Heart right ventricle (tissue), 16 donors: ENCODE measurements at regions of chr3 and their contacts with region 1.

Region 1: DNA sequence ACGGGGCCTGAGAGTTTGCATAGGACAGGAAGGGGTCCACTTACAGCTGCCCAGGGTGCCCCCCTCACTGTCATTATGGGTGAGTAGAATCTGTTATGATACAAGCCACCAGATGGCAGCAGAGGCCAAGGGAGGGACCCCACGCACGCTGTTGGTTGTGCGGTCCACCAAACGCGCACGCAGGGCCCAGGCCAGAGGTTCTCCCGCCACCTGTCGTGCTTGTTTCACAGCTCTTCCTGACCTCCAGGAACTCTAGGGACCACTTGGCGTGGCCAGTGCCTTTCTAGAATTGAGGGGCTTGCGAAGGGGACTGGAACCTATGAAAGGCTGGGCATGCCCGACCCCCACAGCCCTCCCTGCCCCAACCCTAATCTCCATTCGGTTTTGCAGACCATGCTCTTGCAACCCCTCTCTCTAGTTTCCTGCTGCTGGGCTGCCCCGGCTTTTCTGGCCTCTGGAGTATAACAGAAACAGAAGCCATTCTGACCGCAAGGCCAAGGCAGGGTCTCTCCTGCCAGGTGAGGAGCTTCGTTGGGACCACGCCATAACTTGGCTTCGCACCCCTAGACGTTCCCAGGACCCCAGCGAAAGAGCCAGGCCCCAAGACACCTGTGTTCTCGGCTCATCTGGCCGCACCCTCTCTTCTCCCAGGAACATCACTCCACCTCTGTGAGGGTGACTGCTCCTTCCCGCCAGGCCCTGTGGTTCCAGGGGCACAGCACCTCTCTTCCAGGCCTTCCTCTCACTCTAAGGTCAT is 46.0 kb downstream of the ALDH1L1 start:
- DNase-seq: peak; percentile 57 to 67
- ATAC-seq: peak; percentile 69 to 87 (median 84)
- H3K4me3 ChIP-seq: no peak overlapping the region
- H3K27ac ChIP-seq: no peak overlapping the region
- H3K4me1 ChIP-seq: peaks cover 0 to 9% (median 0%) of the 10 kb centered on the region in 9 donors
- H3K27me3 ChIP-seq: peaks cover 0 to 11% (median 0%) of the 10 kb centered on the region in 7 donors
- CTCF ChIP-seq: peak; percentile 70 to 88 (median 81)

Region 2: GRCh38 chr3:126186271-126186670 is 51.9 kb after region 1 on chr3:
- intact Hi-C with region 1: loop called in 1 of 10 experiments (anchors 5 kb)
- DNase-seq: no peak
- ATAC-seq: no peak
- H3K4me3 ChIP-seq: no peak overlapping the region
- H3K27ac ChIP-seq: no peak overlapping the region
- H3K4me1 ChIP-seq: peaks cover 0 to 8% (median under 1%) of the 10 kb centered on the region in 9 donors
- H3K27me3 ChIP-seq: peaks cover 0 to 16% (median 0%) of the 10 kb centered on the region in 7 donors
- CTCF ChIP-seq: no peak

Region 3: GRCh38 chr3:126197854-126198584 is 63.6 kb after region 1 on chr3:
- intact Hi-C with region 1: loop called in 6 of 10 experiments (anchors 1 to 5 kb)
- DNase-seq: peak; percentile 56
- ATAC-seq: peak; percentile 68 to 93 (median 83)
- H3K4me3 ChIP-seq: no peak overlapping the region
- H3K27ac ChIP-seq: peak overlapping the region in 1 of 10 donors; percentile 34
- H3K4me1 ChIP-seq: peaks cover 0 to 11% (median 0%) of the 10 kb centered on the region in 9 donors
- H3K27me3 ChIP-seq: no peaks in the 10 kb centered on the region
- CTCF ChIP-seq: peak in 8 of 9 donors; percentile 45 to 73 (median 68)

Region 4: DNA sequence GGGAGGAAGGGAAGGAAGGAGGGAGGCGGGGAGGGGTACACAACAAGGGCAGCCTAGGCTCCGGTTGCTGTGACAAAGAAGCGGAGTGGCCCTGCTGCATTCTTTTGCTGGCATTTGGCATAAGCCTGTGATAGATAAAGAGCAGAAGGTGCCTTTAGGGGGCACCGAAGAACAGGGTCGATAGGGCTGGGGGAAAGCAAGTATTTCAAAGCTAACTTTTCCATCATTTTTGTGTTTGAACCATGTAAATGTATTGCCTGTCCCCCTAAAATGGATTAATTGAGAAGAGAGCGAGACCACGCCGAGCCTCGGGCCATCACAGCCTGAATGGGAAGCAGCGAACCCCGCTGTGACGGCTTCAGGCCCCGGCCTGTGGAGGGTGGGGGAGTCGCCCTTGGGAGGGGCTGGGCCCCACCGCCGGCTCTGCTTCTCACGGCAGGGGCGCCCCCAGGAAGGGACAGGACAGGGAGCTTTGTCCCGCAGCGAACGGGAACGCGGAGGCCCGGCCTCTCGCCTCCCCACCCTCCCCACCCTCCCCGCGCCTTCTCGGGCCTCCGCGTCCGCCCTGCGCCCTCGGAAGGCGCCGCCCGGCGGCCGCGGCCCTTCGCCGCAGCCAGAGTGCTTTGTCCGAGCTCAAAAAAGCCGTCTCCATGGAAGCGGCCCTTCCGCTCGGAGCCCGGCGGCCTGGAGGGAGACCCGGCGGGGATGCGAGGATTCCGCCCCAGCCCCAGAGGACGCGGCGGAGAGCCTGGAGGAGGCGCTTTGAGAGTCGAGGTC is 78.4 kb after region 1 on chr3:
- intact Hi-C with region 1: loop called in 2 of 10 experiments (anchors 5 to 10 kb)
- DNase-seq: peak; percentile 37 to 67
- ATAC-seq: peak; percentile 66 to 81 (median 75)
- H3K4me3 ChIP-seq: peak overlapping the region; percentile 30 to 61 (median 56)
- H3K27ac ChIP-seq: peak overlapping the region in 9 of 10 donors; percentile 55 to 77 (median 72)
- H3K4me1 ChIP-seq: peaks cover 0 to 36% (median 23%) of the 10 kb centered on the region in 9 donors
- H3K27me3 ChIP-seq: peaks cover 0 to 69% (median 21%) of the 10 kb centered on the region in 7 donors
- CTCF ChIP-seq: peak in 8 of 9 donors; percentile 17 to 77 (median 41)

Region 5: DNA sequence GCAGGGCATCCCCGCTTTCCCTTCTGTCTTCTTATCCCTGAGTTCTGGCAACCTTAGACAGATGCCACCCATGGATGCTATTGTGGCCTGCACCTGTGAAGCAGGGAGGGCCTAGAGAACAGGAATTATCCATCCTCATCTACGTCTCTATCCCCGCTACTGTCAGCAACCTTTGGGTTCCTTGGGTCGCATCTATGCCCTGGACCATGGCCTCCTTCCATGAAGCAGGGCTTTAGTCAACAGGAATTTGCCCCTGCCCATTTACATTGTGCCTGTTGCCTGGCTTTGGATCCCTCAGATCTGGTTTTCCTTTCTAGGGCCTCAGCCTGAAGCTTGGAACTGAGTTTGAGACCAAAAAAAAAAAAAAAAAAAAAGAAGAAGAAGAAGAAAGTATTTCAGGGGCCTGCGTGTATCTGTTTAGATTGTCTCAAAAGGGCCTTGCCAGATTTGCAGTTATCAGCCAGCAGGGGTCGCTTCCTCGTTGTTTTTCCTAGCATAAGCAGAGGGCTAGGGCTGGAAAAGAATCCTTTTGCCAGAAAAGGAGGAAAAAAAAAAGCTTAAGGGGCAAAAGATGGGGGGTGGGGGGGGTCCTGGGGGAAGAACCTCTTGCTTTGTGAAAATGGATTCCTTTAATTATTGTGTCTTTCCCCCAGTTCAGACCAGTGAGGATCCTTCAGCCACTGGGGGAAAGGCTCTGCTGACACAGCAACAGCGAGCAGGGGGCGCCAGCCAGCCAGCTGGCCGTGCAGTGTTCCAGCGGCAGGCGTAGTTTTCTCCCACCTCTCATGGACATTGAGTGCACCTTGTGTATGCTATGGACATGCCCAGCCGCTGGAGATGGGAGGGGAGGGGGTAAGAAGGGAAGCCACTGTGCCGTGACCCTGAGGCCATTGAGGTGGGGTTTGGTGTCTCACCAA is 111.7 kb after region 1 on chr3:
- intact Hi-C with region 1: loop called in 3 of 10 experiments (anchors 10 kb)
- DNase-seq: peak; percentile 48 to 56
- ATAC-seq: peak; percentile 55 to 92 (median 86)
- H3K4me3 ChIP-seq: no peak overlapping the region
- H3K27ac ChIP-seq: no peak overlapping the region
- H3K4me1 ChIP-seq: peaks cover 0 to 5% (median 0%) of the 10 kb centered on the region in 9 donors
- H3K27me3 ChIP-seq: peaks cover 0 to 3% (median 0%) of the 10 kb centered on the region in 7 donors
- CTCF ChIP-seq: peak; percentile 26 to 68 (median 56)

Region 6: GRCh38 chr3:126389112-126389793 is 254.9 kb after region 1 on chr3:
- intact Hi-C with region 1: loop called (anchors 1 to 5 kb)
- DNase-seq: peak; percentile 85 to 90
- ATAC-seq: peak; percentile 94 to 98 (median 96)
- H3K4me3 ChIP-seq: peak overlapping the region; percentile 11 to 64 (median 49)
- H3K27ac ChIP-seq: peak overlapping the region; percentile 28 to 87 (median 79)
- H3K4me1 ChIP-seq: peaks cover 0 to 11% (median 5%) of the 10 kb centered on the region in 9 donors
- H3K27me3 ChIP-seq: peaks cover 0 to 23% (median 4%) of the 10 kb centered on the region in 7 donors
- CTCF ChIP-seq: peak; percentile 89 to 100 (median 97)

Region 7: DNA sequence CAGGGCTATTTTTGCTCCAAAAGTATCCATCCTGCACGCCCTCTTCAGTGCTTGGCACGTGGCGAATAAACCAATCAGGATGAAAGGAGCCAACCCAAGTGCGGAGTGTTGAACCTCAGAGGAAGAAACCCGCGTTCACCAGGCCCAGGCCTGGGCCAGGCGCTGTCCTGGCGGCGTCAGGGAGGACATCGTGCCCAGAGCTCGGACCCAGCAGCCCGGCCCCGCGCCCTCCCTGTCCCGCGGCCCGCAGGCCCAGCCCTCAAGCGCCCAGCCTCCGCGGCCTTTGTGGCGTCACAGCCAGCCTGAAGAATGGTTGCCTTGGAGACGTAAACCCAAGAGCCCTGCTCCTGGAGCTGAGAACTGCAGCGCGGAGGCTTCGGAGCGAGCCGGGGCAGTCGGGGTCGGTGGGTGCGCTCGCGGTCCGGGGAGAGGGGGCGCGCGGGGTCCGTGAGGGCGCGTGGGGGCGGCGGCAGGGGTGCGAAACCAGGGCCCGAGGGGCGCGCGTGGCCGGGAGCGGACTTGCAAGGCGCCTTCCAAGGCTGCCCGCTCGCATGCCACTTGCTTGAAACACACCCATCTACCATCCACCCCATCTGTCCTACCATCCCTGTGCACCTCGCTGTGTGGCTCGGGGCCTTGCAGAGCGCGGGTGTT is 260.3 kb after region 1 on chr3 and contains the start of gene CFAP100:
- intact Hi-C with region 1: loop called (anchors 1 to 5 kb)
- DNase-seq: peak; percentile 25 to 41
- ATAC-seq: peak; percentile 4 to 81 (median 62)
- H3K4me3 ChIP-seq: peak within 1 kb of the TSS in 9 of 10 donors; percentile 14 to 43 (median 34)
- H3K27ac ChIP-seq: no peak within 1 kb of the TSS
- H3K4me1 ChIP-seq: peaks cover 0 to 9% (median 3%) of the 10 kb centered on the region in 9 donors
- H3K27me3 ChIP-seq: peaks cover 0 to 42% (median 14%) of the 10 kb centered on the region in 7 donors
- CTCF ChIP-seq: no peak
- total RNA-seq, gene CFAP100: not detected